Gastrocnemius medialis (tissue), 4 donors: ENCODE measurements at regions of chr19 and their contacts with region 1.

Region 1: GRCh38 chr19:49640113-49640898 is at the start of gene RRAS:
- DNase-seq: peak; percentile 100
- ATAC-seq: peak; percentile 74 to 76
- H3K4me3 ChIP-seq: peak within 1 kb of the TSS; percentile 64 to 95 (median 80)
- H3K27ac ChIP-seq: peak within 1 kb of the TSS; percentile 93 to 99 (median 97)
- H3K4me1 ChIP-seq: peaks cover 31 to 37% of the 10 kb centered on the region in 2 donors
- H3K27me3 ChIP-seq: no peaks in the 10 kb centered on the region
- CTCF ChIP-seq: no peak
- POLR2A ChIP-seq: peak; percentile 84 to 94
- total RNA-seq, gene RRAS: 12.4 to 26.2 (median 24.2) TPM

Region 2: GRCh38 chr19:49580264-49581006 is 59.9 kb before region 1 on chr19 and contains the start of gene NOSIP:
- in situ Hi-C with region 1: no loop called
- intact Hi-C with region 1: loop called (anchors 2 kb)
- DNase-seq: peak; percentile 96
- ATAC-seq: peak; percentile 98
- H3K4me3 ChIP-seq: peak within 1 kb of the TSS; percentile 56 to 86 (median 74)
- H3K27ac ChIP-seq: peak within 1 kb of the TSS; percentile 80 to 88 (median 83)
- H3K4me1 ChIP-seq: peaks cover 42 to 48% of the 10 kb centered on the region in 2 donors
- H3K27me3 ChIP-seq: no peaks in the 10 kb centered on the region
- CTCF ChIP-seq: peak in 1 of 5 experiments; percentile 20
- POLR2A ChIP-seq: peak; percentile 95 to 96
- total RNA-seq, gene NOSIP: 62.4 to 92.8 (median 78.9) TPM

Region 3: GRCh38 chr19:49590071-49590970 is 50.0 kb before region 1 on chr19:
- in situ Hi-C with region 1: no loop called
- intact Hi-C with region 1: loop called (anchors 1 kb)
- DNase-seq: peak; percentile 84 to 95
- ATAC-seq: peak; percentile 68 to 74
- H3K4me3 ChIP-seq: peak overlapping the region; percentile 62 to 82 (median 70)
- H3K27ac ChIP-seq: peak overlapping the region; percentile 86 to 95 (median 94)
- H3K4me1 ChIP-seq: peaks cover 14 to 15% of the 10 kb centered on the region in 2 donors
- H3K27me3 ChIP-seq: no peaks in the 10 kb centered on the region
- CTCF ChIP-seq: no peak
- POLR2A ChIP-seq: peak; percentile 65 to 72

Region 4: GRCh38 chr19:49665351-49666119 is 25.2 kb after region 1 on chr19 and contains the starts of genes BCL2L12 and IRF3:
- in situ Hi-C with region 1: no loop called
- intact Hi-C with region 1: loop called (anchors 1 kb)
- DNase-seq: peak; percentile 94 to 96
- ATAC-seq: peak; percentile 95 to 96
- H3K4me3 ChIP-seq: peak within 1 kb of the TSS; percentile 70 to 81 (median 72)
- H3K27ac ChIP-seq: peak within 1 kb of the TSS; percentile 81 to 88 (median 87)
- H3K4me1 ChIP-seq: peaks cover 16 to 23% of the 10 kb centered on the region in 2 donors
- H3K27me3 ChIP-seq: no peaks in the 10 kb centered on the region
- CTCF ChIP-seq: no peak
- POLR2A ChIP-seq: peak; percentile 72 to 77
- total RNA-seq, gene BCL2L12: 10.7 to 12.9 (median 11.8) TPM
- total RNA-seq, gene IRF3: 11.0 to 18.6 (median 13.7) TPM

Region 5: DNA sequence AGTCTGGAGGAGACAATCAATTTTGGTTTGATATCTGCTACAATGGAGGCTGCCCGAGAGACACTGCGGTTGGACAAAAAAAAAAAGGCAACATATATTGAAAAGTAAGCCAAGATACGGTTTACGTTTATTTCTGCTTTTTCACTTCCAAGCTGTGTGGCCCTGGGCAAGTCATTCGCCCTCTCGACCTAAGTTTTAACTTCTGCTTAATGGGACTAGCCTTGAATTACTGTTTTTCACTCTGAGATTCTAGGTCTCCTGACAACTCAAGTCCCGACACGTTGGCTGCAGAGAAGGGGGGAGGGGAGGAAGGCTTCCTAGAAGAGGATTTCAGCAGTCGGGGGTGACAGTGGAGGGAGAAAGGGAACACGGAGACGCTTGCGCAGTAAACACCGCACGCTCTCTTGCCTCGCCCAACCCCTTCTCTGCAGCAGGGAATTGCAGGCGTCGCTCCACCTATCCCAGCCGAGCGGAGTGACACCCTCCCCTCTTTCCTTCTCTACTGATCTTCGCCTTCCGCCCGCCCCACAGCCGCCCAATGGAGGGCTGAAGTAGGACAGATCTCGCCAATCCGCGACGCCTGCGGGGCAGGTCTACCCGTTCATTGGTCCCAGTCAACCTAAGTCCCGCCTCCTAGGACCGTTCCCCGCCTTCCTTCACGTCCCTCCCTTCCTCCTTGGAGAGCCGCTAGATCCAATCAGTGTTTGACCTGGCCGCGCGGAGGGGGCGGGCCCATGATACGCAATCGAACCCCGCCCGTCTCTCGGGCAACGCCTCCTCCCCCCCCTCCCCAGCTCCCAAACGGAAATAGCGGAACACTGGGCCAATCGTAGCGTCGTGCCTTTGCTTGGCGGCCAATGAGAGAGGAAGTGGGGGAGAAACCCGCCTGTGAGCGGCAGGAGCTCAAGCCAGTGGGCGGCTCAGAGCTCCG is 126.0 kb after region 1 on chr19:
- in situ Hi-C with region 1: no loop called
- intact Hi-C with region 1: loop called (anchors 1 kb)
- DNase-seq: peak; percentile 100
- ATAC-seq: peak; percentile 87 to 92
- H3K4me3 ChIP-seq: peak overlapping the region; percentile 48 to 97 (median 74)
- H3K27ac ChIP-seq: peak overlapping the region; percentile 91 to 98 (median 96)
- H3K4me1 ChIP-seq: peaks cover 19 to 22% of the 10 kb centered on the region in 2 donors
- H3K27me3 ChIP-seq: no peaks in the 10 kb centered on the region
- CTCF ChIP-seq: no peak
- POLR2A ChIP-seq: peak; percentile 71 to 75

Region 6: GRCh38 chr19:49808711-49809159 is 168.4 kb after region 1 on chr19:
- in situ Hi-C with region 1: no loop called
- intact Hi-C with region 1: loop called (anchors 5 kb)
- DNase-seq: peak; percentile 92 to 94
- ATAC-seq: peak; percentile 44 to 57
- H3K4me3 ChIP-seq: peak overlapping the region; percentile 67 to 87 (median 80)
- H3K27ac ChIP-seq: peak overlapping the region; percentile 91 to 96 (median 94)
- H3K4me1 ChIP-seq: peaks cover 17 to 21% of the 10 kb centered on the region in 2 donors
- H3K27me3 ChIP-seq: no peaks in the 10 kb centered on the region
- CTCF ChIP-seq: peak in 1 of 5 experiments; percentile 14
- POLR2A ChIP-seq: peak; percentile 77 to 82

Region 7: DNA sequence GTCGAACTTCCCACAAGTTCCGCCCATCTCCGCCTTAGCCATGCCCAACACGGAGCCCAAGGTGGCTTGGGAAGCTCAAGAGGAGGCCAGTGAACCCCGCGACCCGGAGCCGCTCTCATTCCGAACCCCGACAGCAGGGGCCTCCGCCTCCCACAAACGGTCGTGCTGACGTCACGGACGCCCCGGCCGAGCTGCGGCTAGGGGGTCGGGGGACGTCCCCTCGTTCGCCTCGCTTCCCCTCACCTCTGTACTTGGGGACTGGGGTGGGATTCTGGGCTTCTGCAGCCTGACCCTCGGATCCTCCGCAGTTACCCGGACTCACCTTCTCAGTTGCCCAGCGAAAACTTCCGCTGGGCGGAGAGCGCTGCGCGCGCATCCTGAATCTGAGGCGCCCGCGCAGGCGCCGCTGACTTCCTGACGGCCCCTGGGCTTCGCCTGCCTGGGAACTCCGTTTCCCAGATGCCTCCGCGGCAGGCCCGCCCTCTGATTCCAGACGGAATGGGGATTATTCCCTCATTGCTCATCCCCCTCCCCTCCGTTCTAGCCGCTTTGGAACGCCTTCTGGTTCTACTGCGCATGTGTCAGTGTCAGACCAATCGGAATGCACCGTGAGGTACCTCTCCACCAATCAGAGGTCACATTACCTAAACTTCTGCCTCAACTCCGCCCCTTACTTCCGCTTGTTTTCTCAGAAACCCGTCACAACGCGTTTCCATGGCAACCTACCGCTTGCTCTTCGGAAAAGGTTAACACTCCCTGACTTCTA is 384.9 kb after region 1 on chr19 and contains the start of gene VRK3:
- in situ Hi-C with region 1: no loop called
- intact Hi-C with region 1: loop called (anchors 5 kb)
- DNase-seq: peak; percentile 99
- ATAC-seq: peak; percentile 99
- H3K4me3 ChIP-seq: peak within 1 kb of the TSS; percentile 93 to 99 (median 96)
- H3K27ac ChIP-seq: peak within 1 kb of the TSS; percentile 90 to 98 (median 94)
- H3K4me1 ChIP-seq: peaks cover 24 to 27% of the 10 kb centered on the region in 2 donors
- H3K27me3 ChIP-seq: no peaks in the 10 kb centered on the region
- CTCF ChIP-seq: no peak
- POLR2A ChIP-seq: peak; percentile 56 to 77
- total RNA-seq, gene VRK3: 36.0 to 52.8 (median 39.9) TPM